Left colon (tissue), 2 donors: ENCODE measurements at regions of chr16 and their contacts with region 1.

Region 1: GRCh38 chr16:85137323-85138072 is 25.2 kb upstream of the CIBAR2 start:
- DNase-seq: peak; percentile 75 to 89
- ATAC-seq: peak; percentile 88

Region 2: GRCh38 chr16:84699712-84700445 is 437.6 kb before region 1 on chr16 and contains the start of gene USP10:
- intact Hi-C with region 1: no loop called
- DNase-seq: peak; percentile 68 to 83
- ATAC-seq: peak; percentile 85
- total RNA-seq, gene USP10: 65.3 to 77.3 TPM

Region 3: DNA sequence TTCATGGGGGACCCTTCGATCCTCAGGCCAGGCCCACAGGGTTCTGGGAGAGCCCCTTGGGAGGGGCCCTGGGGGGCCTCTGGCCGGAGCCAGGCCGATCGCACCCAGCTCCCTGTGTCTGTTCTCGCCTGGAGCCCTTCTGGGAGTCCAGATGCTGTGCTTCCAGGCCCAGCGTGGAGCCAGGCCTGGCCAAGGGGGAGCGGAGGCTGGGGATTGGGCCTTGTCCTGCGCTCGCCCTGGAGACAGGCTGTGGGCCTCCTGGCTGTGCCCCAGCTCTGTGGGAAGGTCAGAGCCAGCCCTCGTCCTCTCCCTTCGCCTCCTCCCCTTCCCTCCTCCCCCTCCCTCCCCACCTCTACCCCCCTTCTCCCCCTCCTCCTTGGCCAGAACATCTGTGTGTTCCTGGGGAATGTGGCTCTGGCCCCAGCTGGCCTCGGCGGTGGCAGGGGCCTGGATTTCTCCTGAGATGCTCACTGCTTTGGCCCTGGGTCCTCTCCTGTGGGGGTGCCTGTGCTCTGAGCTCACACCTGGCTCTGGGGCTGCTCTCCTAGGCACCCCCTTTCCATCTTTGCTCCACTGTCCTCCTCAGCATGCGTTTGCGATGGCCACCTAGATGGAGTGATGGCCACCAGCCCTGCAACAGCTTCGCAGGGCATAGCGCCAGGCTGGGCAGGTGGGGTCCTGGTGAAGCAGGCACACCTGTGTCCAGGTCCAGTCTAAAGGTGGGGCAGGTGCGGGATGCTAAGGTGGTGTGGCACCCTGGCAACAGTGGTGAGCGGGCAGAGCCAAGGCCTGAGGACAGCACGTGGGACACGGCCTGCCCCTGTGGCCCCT is 65.3 kb after region 1 on chr16:
- intact Hi-C with region 1: loop called in 1 of 2 experiments (anchors 10 kb)
- DNase-seq: peak; percentile 52 to 83
- ATAC-seq: peak; percentile 41

Region 4: GRCh38 chr16:85234310-85235204 is 97.1 kb after region 1 on chr16:
- intact Hi-C with region 1: no loop called
- DNase-seq: peak; percentile 46 to 56
- ATAC-seq: peak; percentile 66